ENCODE measurements at regions of chr9 and their contacts with region 1.

Region 1: GRCh38 chr9:128470560-128470959 is 14.8 kb downstream of the ODF2 start:
- DNase-seq: peak; percentile 24
- ATAC-seq: peak; percentile 30
- H3K4me3 Mint-ChIP-seq: no peak overlapping the region
- H3K27ac Mint-ChIP-seq: peak overlapping the region; percentile 32
- H3K4me1 Mint-ChIP-seq: peaks cover 2% of the 10 kb centered on the region
- H3K27me3 Mint-ChIP-seq: no peaks in the 10 kb centered on the region

Region 2: DNA sequence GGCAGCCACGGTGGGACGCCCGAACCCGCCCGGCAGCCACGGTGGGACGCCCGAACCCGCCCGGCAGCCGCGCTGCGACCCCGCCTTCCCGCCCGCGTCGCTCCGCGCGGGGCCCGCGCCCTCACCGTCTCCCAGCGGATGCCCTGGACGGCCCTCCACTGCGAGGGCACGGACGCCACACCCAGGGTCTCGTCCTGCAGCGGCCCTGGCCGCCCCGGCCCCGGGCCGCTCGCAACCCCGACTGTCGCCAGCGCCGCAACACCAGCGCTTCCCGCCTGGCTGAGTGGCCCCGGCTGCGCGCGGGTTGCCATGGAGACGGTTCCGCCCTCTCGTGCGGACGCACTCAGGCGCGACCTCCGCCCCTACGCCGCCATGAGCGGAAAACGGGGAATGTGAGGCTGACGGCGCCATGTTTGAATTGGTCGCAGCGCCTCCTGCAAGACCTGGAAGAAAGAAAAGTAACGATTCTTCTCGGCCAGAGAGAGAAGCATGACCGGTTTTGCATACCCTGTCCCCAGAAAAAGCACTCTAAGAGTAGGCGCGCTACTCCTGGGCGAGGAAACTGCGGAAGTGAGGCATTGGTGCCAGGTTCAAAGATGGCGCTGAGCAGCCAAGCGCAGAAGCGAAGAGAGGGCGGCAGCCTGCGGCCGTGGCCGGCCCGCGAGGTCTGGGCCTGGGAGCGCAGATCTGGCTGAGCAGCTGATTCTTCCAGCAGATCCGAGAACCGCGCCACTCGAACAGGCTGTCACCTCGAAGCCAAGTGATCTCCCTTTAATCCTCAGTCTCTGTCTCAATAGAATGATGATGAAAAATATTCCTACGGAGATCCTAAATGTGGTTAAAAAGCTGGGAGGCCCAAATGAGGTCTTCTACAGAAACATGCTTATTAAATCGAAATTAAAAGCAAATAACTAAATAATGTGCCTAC is 186.1 kb after region 1 on chr9 and contains the start of gene DYNC2I2:
- CTCF ChIA-PET with region 1: no interaction called
- POLR2A ChIA-PET with region 1: no interaction called
- intact Hi-C with region 1: no loop called
- DNase-seq: peak; percentile 99
- ATAC-seq: peak; percentile 98
- H3K4me3 Mint-ChIP-seq: peak within 1 kb of the TSS; percentile 82
- H3K27ac Mint-ChIP-seq: peak within 1 kb of the TSS; percentile 100
- H3K4me1 Mint-ChIP-seq: peaks cover 6% of the 10 kb centered on the region
- H3K27me3 Mint-ChIP-seq: no peaks in the 10 kb centered on the region
- total RNA-seq, gene DYNC2I2: 26.7 to 35.7 TPM

Region 3: GRCh38 chr9:128986671-128987070 is 516.1 kb after region 1 on chr9:
- CTCF ChIA-PET with region 1: no interaction called
- POLR2A ChIA-PET with region 1: interaction called, 10 read pairs
- intact Hi-C with region 1: no loop called
- DNase-seq: no peak
- ATAC-seq: no peak
- H3K4me3 Mint-ChIP-seq: no peak overlapping the region
- H3K27ac Mint-ChIP-seq: no peak overlapping the region
- H3K4me1 Mint-ChIP-seq: no peaks in the 10 kb centered on the region
- H3K27me3 Mint-ChIP-seq: no peaks in the 10 kb centered on the region